GM13977 (cell line): ENCODE measurements at regions of chrX and their contacts with region 1.

Region 1: GRCh38 chrX:10189317-10190268 is 32.8 kb downstream of the CLCN4 start:
- DNase-seq: peak; percentile 64
- CTCF ChIP-seq: peak; percentile 94

Region 2: DNA sequence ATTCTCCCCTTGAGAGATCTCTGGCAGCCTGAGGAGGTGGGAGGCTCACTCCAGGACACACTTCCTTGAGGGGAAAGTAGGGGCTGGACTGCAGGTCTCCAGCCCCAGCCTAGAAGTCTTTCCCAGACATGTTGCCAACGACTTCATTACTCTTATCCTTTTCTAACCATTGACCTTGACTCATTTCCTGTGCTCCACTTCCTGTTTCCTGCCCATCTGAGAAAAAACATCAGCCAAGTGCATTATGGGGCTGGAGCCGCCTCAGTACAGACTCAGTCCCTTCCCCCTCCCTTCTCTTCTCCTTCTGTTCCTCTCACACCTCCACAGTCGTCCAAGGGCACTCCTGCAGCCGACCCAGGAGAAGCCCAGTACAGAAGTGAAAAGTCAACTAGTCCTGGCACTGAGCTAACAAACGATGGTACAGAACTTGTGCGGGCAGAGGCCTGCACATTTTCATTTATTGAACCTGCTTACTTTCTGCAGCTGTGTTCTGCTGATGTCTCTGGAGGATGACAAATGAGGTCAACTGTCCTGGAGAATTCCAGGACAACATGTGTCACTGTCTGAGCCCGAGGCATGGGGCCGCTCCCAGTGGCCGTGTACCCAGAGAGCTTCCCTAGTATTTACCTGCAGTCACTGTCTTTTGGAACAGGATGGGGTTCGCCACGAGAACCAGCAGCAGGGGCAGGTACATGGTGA is 444.0 kb before region 1 on chrX:
- in situ Hi-C with region 1: no loop called
- DNase-seq: no peak
- CTCF ChIP-seq: no peak

Region 3: DNA sequence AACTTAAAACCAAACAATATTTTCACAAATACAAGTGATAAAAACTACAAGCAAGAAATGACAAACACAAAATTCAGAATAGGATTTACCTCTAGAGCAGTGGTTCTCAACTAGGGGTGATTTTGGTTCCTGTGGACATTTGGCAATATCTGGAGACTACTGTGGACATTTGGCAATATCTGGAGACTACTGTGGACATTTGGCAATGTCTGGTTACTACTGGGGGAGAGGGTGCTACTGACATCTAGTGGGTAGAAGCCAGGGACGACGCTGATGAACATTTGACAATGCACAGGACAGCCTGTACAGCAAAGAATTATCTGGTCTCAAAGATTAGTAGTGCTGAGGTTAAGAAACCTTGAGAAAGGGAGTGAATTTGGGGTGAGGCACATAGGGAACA is 137.0 kb after region 1 on chrX:
- in situ Hi-C with region 1: no loop called
- DNase-seq: no peak
- CTCF ChIP-seq: peak; percentile 31

Region 4: GRCh38 chrX:10615931-10616775 is 426.6 kb after region 1 on chrX:
- in situ Hi-C with region 1: loop called (anchors 25 kb)
- DNase-seq: peak; percentile 56
- CTCF ChIP-seq: peak; percentile 63

Region 5: GRCh38 chrX:11137543-11138139 is 948.0 kb after region 1 on chrX:
- in situ Hi-C with region 1: loop called (anchors 10 kb)
- DNase-seq: peak; percentile 59
- CTCF ChIP-seq: peak; percentile 55